Lower lobe of right lung (tissue), 2 donors: ENCODE measurements at regions of chr2 and their contacts with region 1.

Region 1: DNA sequence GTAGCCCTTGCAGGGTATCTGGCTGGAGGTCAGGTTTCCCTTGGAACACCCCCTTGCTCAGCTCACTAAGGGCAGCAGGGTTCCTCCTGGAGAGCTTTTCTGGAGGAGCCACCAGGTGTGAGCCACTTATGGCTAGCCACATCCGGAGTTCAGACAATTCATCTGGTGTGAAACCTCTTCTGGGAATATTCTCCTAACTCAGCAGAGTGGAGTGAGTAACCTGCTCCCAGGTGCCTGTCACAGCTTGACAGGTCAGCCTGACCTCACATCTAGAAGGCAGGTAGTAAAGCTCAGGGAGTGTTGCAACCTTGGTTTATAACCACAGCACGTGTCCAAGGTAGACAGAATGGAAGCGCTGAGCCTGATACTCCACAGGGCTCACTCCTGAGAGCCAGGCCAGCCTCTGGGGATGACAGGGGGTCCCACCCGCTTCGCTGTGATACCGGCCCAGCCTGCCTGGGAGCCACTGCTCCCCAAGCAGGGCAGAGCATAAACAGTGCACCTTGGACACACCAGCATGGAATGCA is 62.6 kb upstream of the TGFA start:
- DNase-seq: no peak
- ATAC-seq: peak; percentile 60 to 74
- H3K4me3 ChIP-seq: no peak overlapping the region
- H3K27ac ChIP-seq: no peak overlapping the region
- H3K4me1 ChIP-seq: no peaks in the 10 kb centered on the region
- H3K27me3 ChIP-seq: no peaks in the 10 kb centered on the region
- CTCF ChIP-seq: no peak

Region 2: DNA sequence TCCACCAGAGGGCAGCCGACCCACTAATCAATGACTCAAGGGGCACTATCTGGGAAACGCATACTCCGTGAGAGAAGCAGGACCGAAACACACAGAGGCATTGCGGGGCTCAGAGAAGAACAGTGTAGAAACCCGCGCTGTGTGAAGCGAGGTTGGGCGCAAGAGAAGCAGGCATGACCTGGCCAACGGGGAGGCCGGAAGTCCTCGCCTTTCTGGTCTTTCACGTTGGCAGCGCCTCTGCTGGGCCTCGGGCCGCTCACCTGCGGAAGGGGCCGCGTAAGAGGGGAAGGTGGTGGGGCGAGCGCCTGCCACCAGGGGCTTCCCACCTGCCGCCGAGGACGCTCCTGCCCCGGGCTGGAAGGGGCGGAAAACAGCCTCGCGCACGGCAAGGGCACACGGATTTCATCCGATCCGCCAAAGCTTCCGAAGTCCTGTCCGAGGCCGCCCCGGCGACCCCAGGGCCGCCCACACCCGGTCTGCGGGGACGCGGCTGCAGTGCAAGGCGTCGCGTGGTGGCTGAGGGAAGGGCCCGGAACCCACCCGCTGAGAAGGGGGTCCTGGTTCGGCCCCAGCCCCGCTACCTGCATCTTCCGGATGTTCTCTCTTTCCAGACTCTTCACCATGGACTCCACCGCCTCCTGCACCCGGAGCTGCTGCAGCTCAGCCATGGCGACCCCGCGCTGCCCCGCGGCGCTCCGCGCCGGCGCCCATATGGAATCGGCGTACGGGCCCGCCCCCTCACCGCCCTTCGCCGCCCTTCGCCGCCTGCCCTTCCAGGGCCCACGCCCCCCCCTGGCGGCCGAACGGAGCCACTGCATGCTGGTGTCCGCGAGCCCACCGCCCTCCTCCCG is 314.7 kb before region 1 on chr2 and contains the start of gene FAM136A:
- intact Hi-C with region 1: loop called (anchors 10 kb)
- DNase-seq: peak; percentile 93
- ATAC-seq: peak; percentile 96 to 98
- H3K4me3 ChIP-seq: peak within 1 kb of the TSS; percentile 100
- H3K27ac ChIP-seq: peak within 1 kb of the TSS; percentile 91
- H3K4me1 ChIP-seq: peaks cover 18% of the 10 kb centered on the region
- H3K27me3 ChIP-seq: no peaks in the 10 kb centered on the region
- CTCF ChIP-seq: peak; percentile 94
- total RNA-seq, gene FAM136A: 19.5 TPM